Mammary epithelial cell (primary cell): ENCODE measurements at regions of chr2 and their contacts with region 1.

Region 1: DNA sequence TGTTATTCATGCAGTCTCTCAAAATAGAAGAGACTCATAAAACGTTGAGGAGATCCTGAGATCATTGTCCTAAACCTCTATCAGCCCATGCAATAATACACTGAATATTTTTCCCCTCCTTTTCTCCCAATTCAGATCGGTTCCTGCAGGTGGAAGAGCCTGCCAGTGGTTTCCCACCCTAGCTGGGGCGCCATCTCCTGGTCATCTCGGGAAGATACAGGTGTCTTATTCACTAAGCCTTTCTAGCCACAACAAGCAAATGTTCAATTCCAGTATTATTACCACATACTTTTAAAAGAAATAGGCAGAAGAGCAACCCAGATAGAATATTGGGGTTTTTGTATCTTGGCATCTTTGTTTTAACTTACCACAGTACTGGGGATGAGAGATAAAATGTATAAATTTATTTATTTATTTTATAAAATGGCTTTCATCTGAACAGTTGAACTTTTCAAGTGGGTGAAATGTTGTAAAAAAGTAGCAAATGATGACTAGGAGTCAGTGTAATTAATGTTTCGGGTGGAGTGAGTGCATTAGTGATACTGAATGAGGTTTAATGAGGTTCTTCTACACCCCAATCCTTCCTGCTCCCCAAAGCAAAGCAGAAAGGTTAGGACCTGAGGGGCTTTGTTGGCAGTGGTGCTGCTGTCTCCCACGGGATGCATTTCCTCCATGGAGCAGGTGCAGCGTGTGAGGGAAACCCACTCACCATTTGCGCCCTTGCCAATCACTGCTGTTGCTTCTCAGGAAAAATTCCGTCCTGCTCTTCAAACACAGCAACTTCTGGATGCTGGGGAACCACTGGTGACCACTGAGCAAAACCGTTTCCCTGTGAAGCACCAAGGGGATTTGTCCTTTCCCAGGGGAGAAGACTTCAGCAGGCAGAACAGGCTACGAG is 147.1 kb upstream of the FHL2 start:
- DNase-seq: peak; percentile 44
- H3K4me3 ChIP-seq: no peak overlapping the region
- H3K27ac ChIP-seq: no peak overlapping the region
- H3K4me1 ChIP-seq: peaks cover 11% of the 10 kb centered on the region
- H3K27me3 ChIP-seq: no peaks in the 10 kb centered on the region
- CTCF ChIP-seq: peak; percentile 87 to 89

Region 2: GRCh38 chr2:103656558-103656957 is 1889.4 kb before region 1 on chr2:
- CTCF ChIA-PET with region 1: no interaction called
- dilution Hi-C with region 1: no loop called
- in situ Hi-C with region 1: no loop called
- intact Hi-C with region 1: no loop called
- DNase-seq: no peak
- H3K4me3 ChIP-seq: no peak overlapping the region
- H3K27ac ChIP-seq: no peak overlapping the region
- H3K4me1 ChIP-seq: no peaks in the 10 kb centered on the region
- H3K27me3 ChIP-seq: no peaks in the 10 kb centered on the region
- CTCF ChIP-seq: no peak

Region 3: GRCh38 chr2:105114551-105114950 is 431.4 kb before region 1 on chr2:
- CTCF ChIA-PET with region 1: no interaction called
- dilution Hi-C with region 1: no loop called
- in situ Hi-C with region 1: loop called in 1 of 2 experiments (anchors 25 kb)
- intact Hi-C with region 1: no loop called
- DNase-seq: peak; percentile 14
- H3K4me3 ChIP-seq: no peak overlapping the region
- H3K27ac ChIP-seq: no peak overlapping the region
- H3K4me1 ChIP-seq: no peaks in the 10 kb centered on the region
- H3K27me3 ChIP-seq: no peaks in the 10 kb centered on the region
- CTCF ChIP-seq: peak; percentile 64 to 73

Region 4: GRCh38 chr2:105329561-105330495 is 216.2 kb before region 1 on chr2 and contains the start of gene TGFBRAP1:
- CTCF ChIA-PET with region 1: interaction called, 40 read pairs
- dilution Hi-C with region 1: no loop called
- in situ Hi-C with region 1: no loop called
- intact Hi-C with region 1: no loop called
- DNase-seq: peak; percentile 27
- H3K4me3 ChIP-seq: peak within 1 kb of the TSS; percentile 47 to 65 (median 63)
- H3K27ac ChIP-seq: peak within 1 kb of the TSS; percentile 68
- H3K4me1 ChIP-seq: peaks cover 31% of the 10 kb centered on the region
- H3K27me3 ChIP-seq: no peaks in the 10 kb centered on the region
- CTCF ChIP-seq: no peak
- total RNA-seq, gene TGFBRAP1: 24.6 to 44.8 TPM

Region 5: DNA sequence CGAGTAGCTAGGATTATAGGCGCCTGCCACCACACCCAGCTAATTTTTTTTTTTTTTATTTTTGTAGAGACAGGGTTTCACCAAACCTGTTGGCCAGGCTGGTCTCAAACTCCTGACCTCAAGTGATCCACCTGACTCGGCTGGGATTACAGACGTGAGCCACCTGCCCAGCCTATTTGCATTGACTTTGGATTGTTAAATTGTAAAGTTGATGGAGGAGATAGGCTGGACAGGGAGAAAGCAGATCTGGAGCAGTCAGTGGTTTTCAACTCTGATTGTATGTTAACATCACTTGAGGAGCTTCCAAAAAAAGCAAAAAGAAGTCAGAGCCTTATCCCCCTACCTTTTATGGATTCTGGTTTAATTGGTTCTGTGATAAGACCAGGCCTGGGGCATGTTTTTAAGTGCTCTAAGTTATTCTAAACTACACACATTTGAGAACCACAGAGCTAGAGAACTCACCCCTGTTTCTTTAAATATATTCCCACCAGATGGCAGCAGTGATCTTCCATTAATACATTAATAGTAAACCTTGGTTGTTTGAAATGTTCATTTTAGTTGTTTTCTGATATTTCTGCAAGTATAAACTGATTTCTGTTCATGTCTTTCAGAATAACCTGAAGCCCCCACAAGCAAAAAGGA is 201.2 kb before region 1 on chr2:
- CTCF ChIA-PET with region 1: no interaction called
- dilution Hi-C with region 1: no loop called
- in situ Hi-C with region 1: no loop called
- intact Hi-C with region 1: loop called (anchors 1 kb)
- DNase-seq: no peak
- H3K4me3 ChIP-seq: no peak overlapping the region
- H3K27ac ChIP-seq: no peak overlapping the region
- H3K4me1 ChIP-seq: no peaks in the 10 kb centered on the region
- H3K27me3 ChIP-seq: no peaks in the 10 kb centered on the region
- CTCF ChIP-seq: peak; percentile 33 to 43

Region 6: GRCh38 chr2:105369747-105370690 is 176.0 kb before region 1 on chr2:
- CTCF ChIA-PET with region 1: interaction called, 3 read pairs
- dilution Hi-C with region 1: no loop called
- in situ Hi-C with region 1: no loop called
- intact Hi-C with region 1: loop called (anchors 1 kb)
- DNase-seq: peak; percentile 71
- H3K4me3 ChIP-seq: no peak overlapping the region
- H3K27ac ChIP-seq: no peak overlapping the region
- H3K4me1 ChIP-seq: peaks cover 35% of the 10 kb centered on the region
- H3K27me3 ChIP-seq: no peaks in the 10 kb centered on the region
- CTCF ChIP-seq: peak; percentile 81 to 91

Region 7: GRCh38 chr2:105397964-105398698 is 147.8 kb before region 1 on chr2:
- CTCF ChIA-PET with region 1: interaction called, 14 read pairs
- dilution Hi-C with region 1: no loop called
- in situ Hi-C with region 1: no loop called
- intact Hi-C with region 1: no loop called
- DNase-seq: no peak
- H3K4me3 ChIP-seq: peak overlapping the region; percentile 96 to 98 (median 96)
- H3K27ac ChIP-seq: peak overlapping the region; percentile 92
- H3K4me1 ChIP-seq: peaks cover 45% of the 10 kb centered on the region
- H3K27me3 ChIP-seq: no peaks in the 10 kb centered on the region
- CTCF ChIP-seq: peak in 1 of 2 donors; percentile 12